BJ (cell line): ENCODE measurements at regions of chr2 and their contacts with region 1.

Region 1: GRCh38 chr2:200306196-200306930 is at the start of gene SPATS2L:
- DNase-seq: peak; percentile 49
- H3K4me3 ChIP-seq: peak within 1 kb of the TSS; percentile 75
- H3K27me3 ChIP-seq: no peaks in the 10 kb centered on the region
- CTCF ChIP-seq: no peak
- polyA plus RNA-seq, gene SPATS2L: 243 TPM in 2 replicates

Region 2: DNA sequence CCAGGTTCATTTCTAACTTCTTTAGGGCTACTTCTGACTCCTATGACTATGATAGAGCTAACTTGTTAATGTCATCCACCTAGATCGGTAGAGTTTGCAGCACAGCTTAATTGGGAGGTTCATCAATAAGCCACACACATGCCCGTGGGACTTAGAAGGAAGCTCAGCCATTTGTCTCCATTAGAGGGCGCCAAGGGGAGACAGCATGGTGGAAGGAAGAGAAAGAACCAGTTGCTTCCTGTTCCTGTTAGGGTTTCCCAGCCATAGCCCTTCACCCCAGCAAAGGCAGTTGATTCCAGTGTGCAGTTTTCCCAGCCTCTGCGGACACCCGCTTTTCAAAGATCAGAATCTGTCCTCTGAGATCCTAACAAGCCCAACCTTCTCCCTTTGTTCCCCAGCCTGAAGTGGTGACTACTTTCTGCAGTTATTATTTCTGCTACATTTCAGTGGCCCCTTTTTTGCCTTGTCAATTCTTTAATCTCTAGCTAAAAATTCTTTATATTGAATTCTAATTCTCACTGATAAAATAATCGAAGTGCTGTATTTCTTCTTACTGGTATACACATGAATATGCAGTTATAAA is 320.6 kb before region 1 on chr2:
- CTCF ChIA-PET with region 1: interaction called, 10 read pairs
- POLR2A ChIA-PET with region 1: no interaction called
- DNase-seq: no peak
- H3K4me3 ChIP-seq: no peak overlapping the region
- H3K27me3 ChIP-seq: no peaks in the 10 kb centered on the region
- CTCF ChIP-seq: peak; percentile 80

Region 3: GRCh38 chr2:200319548-200320337 is 13.4 kb after region 1 on chr2:
- CTCF ChIA-PET with region 1: interaction called, 4 read pairs
- POLR2A ChIA-PET with region 1: interaction called, 10 read pairs
- DNase-seq: no peak
- H3K4me3 ChIP-seq: no peak overlapping the region
- H3K27me3 ChIP-seq: no peaks in the 10 kb centered on the region
- CTCF ChIP-seq: no peak

Region 4: DNA sequence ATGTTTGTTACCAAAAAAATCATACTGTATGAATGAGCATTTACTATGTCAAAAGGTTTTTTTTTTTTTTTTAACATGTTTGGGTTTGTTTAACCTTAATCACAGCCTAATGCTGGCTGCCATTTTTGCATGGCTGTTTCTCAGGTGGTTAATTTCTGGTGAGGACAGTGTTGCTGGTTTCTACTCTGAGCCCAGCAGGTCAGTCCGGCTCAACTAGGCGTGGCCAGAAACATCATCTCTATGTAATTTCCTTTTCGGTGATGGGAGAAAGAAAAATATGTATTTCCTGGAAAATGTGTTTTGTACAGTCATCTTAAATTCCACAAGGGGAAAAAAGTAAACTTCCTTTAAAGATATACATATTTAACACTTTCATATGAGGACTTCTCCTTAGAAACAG is 480.5 kb after region 1 on chr2:
- CTCF ChIA-PET with region 1: no interaction called
- POLR2A ChIA-PET with region 1: interaction called, 10 read pairs
- DNase-seq: peak; percentile 36
- H3K4me3 ChIP-seq: no peak overlapping the region
- H3K27me3 ChIP-seq: no peaks in the 10 kb centered on the region
- CTCF ChIP-seq: no peak